ENCODE measurements at regions of chr4 and their contacts with region 1.

Region 1: DNA sequence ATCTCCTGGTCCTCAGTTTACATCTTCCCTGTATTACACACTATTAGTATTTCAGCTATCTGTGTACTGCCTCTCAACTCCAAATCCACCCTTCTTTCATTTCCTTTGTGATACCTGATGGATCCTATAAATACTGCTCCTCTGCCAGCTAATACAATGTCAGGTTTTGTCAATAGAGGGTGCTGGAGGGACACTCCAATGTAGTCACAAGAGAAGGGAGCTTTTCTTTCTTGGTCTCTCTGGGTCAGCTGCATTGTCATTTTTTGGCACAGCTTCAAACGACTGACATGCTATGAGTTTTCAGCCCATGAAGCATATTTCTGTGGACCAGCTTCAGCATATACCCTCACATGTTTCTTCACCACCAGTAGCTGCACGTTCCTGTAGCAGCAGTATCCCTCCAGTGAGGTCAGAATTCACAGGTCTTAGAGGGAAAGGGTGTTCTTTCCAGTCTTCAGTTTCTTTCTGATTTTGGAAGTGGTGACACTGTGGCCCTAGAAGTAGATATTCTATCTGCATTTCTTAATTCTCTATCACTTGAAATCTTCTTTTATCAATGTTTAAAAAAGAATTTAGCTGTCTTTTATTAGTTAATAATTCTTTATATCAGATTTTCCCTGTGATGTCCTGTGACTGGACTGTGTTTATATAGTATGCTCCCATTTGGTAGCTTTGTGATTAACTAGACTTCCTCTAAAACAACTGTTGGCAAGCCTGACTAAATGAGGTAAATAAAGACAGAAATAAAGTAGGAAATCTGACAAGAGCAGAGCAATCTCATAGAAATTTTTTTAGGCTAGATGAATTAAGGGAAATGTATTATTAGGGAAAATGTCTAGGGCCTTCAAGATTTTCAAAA is 60.6 kb downstream of the GABRA2 start:
- DNase-seq: peak; percentile 74
- ATAC-seq: peak; percentile 57; the same call in 1 of the 2 replicates
- H3K4me3 ChIP-seq: no peak overlapping the region
- H3K27ac ChIP-seq: no peak overlapping the region
- H3K4me1 ChIP-seq: no peaks in the 10 kb centered on the region
- H3K27me3 ChIP-seq: no peaks in the 10 kb centered on the region
- CTCF ChIP-seq: peak; percentile 63

Region 2: GRCh38 chr4:45846016-45846415 is 483.3 kb before region 1 on chr4:
- CTCF ChIA-PET with region 1: no interaction called
- POLR2A ChIA-PET with region 1: no interaction called
- intact Hi-C with region 1: no loop called
- DNase-seq: no peak
- ATAC-seq: no peak
- H3K4me3 ChIP-seq: no peak overlapping the region
- H3K27ac ChIP-seq: no peak overlapping the region
- H3K4me1 ChIP-seq: no peaks in the 10 kb centered on the region
- H3K27me3 ChIP-seq: no peaks in the 10 kb centered on the region
- CTCF ChIP-seq: no peak

Region 3: DNA sequence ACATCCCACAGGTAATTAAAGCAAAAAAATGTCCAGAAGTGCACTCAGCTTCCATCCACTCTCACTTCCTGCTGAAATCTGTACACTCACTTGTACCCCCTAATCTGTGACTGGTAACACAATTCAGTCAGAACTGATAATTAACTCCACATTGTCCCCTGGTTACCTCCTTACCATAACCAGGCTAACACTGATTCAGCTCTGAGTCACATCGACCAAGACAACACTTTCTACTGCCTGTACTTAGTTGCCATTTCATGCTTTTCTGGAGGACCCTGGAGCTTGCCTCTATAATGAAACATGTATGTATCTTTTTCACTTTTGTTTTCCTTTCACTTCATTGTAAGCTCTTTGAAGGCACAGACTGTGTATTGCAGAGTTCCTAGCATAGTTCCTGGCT is 74.6 kb before region 1 on chr4:
- CTCF ChIA-PET with region 1: no interaction called
- POLR2A ChIA-PET with region 1: no interaction called
- intact Hi-C with region 1: no loop called
- DNase-seq: peak; percentile 23
- ATAC-seq: no peak
- H3K4me3 ChIP-seq: no peak overlapping the region
- H3K27ac ChIP-seq: no peak overlapping the region
- H3K4me1 ChIP-seq: no peaks in the 10 kb centered on the region
- H3K27me3 ChIP-seq: no peaks in the 10 kb centered on the region
- CTCF ChIP-seq: no peak

Region 4: GRCh38 chr4:46554760-46555465 is 225.6 kb after region 1 on chr4:
- CTCF ChIA-PET with region 1: no interaction called
- POLR2A ChIA-PET with region 1: no interaction called
- intact Hi-C with region 1: loop called (anchors 2 kb)
- DNase-seq: no peak
- ATAC-seq: no peak
- H3K4me3 ChIP-seq: no peak overlapping the region
- H3K27ac ChIP-seq: no peak overlapping the region
- H3K4me1 ChIP-seq: no peaks in the 10 kb centered on the region
- H3K27me3 ChIP-seq: no peaks in the 10 kb centered on the region
- CTCF ChIP-seq: no peak

Region 5: DNA sequence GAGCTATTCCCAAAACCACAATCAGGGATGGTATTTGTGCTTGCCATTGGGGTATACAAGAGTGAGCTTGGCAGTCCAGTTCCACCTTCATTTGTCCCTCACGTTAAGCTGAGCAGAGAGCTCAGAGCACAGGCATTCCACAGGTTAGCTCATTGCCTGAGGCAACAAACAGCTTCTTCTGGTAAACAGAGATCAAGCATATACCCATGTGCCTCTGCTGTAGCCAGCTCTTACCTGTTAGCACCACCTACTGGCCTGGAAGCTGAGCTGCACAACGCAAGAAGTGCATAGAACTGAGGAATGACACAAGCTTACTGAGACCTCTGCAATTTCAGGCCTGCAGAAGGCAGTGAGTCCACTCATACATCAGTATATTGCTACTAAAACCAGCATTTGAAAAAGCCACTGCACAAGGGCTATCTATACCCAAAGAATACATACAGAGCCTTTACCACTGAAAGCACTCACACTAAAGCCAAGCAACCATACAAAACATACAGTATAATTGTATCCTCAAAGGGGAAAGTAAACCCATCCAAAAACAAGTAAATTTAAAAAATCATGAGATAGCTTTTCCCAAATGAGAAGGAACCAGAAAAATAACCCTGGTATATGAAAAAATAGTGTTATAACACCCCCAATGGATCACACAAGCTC is 318.9 kb after region 1 on chr4:
- CTCF ChIA-PET with region 1: interaction called, 22 read pairs
- POLR2A ChIA-PET with region 1: no interaction called
- intact Hi-C with region 1: loop called (anchors 5 kb)
- DNase-seq: peak; percentile 64
- ATAC-seq: peak; percentile 50
- H3K4me3 ChIP-seq: no peak overlapping the region
- H3K27ac ChIP-seq: no peak overlapping the region
- H3K4me1 ChIP-seq: no peaks in the 10 kb centered on the region
- H3K27me3 ChIP-seq: no peaks in the 10 kb centered on the region
- CTCF ChIP-seq: peak; percentile 65

Measured in PC-3 (cell line).